GM10248 (cell line): ENCODE measurements at regions of chr6 and their contacts with region 1.

Region 1: DNA sequence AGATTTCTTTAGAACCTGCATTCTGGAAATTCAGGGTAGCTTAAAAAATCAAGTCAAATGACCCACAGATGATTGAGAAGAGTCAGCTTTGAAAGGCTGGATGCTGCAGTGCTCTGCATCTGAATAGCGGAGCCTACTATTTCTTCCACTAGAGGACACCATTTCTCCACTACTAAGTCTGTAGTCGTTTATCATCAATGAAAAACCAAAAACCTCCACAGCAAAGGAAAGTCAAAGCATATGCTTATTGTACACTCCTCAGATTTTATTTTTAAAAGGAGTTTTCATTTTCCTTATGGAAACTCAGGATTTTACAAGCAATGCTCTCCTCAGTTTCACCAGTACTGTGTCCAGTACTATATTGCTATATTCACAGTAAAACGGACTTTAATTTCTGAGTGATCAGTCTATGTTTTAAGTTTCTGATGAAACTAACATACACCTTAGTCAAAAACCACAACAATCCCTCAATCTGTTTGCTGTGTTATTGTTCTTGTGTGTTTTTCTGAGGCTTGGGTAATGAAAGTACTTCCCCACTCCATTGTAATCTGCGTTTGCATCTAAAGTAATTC is 50.5 kb upstream of the ENPP5 start:
- DNase-seq: peak; percentile 44
- CTCF ChIP-seq: peak; percentile 71

Region 2: DNA sequence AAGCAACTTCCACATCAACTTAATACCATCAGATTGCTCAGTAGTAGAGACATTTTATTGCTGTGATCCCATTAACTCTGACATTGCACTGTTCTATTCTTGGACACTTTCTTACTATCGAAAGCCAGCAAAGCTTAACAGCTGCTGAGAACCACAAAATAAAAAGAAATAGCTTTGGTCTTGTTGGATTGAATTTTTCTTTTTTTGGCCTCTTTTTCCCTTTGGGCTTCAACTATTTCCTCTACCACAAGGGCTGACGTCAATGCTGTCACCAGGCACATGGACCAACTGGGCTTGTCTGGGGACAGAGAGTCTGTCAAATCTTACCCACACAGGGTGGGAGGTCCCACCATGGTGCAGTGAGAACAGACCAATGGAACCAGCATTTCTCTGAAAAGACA is 12.8 kb after region 1 on chr6:
- CTCF ChIA-PET with region 1: interaction called, 11 read pairs
- POLR2A ChIA-PET with region 1: no interaction called
- DNase-seq: no peak
- CTCF ChIP-seq: no peak

Region 3: GRCh38 chr6:46254331-46254730 is 33.0 kb after region 1 on chr6:
- CTCF ChIA-PET with region 1: no interaction called
- POLR2A ChIA-PET with region 1: no interaction called
- DNase-seq: no peak
- CTCF ChIP-seq: no peak